Heart right ventricle (tissue), 16 donors: ENCODE measurements at regions of chr10 and their contacts with region 1.

Region 1: GRCh38 chr10:103145860-103146466 is 47.1 kb downstream of the NT5C2 start:
- DNase-seq: peak; percentile 21 to 91
- ATAC-seq: peak; percentile 80 to 91 (median 88)
- H3K4me3 ChIP-seq: peak overlapping the region in 6 of 10 donors; percentile 3 to 39 (median 35)
- H3K27ac ChIP-seq: peak overlapping the region; percentile 28 to 74 (median 62)
- H3K4me1 ChIP-seq: peaks cover 0 to 63% (median 30%) of the 10 kb centered on the region in 9 donors
- H3K27me3 ChIP-seq: no peaks in the 10 kb centered on the region
- CTCF ChIP-seq: no peak

Region 2: DNA sequence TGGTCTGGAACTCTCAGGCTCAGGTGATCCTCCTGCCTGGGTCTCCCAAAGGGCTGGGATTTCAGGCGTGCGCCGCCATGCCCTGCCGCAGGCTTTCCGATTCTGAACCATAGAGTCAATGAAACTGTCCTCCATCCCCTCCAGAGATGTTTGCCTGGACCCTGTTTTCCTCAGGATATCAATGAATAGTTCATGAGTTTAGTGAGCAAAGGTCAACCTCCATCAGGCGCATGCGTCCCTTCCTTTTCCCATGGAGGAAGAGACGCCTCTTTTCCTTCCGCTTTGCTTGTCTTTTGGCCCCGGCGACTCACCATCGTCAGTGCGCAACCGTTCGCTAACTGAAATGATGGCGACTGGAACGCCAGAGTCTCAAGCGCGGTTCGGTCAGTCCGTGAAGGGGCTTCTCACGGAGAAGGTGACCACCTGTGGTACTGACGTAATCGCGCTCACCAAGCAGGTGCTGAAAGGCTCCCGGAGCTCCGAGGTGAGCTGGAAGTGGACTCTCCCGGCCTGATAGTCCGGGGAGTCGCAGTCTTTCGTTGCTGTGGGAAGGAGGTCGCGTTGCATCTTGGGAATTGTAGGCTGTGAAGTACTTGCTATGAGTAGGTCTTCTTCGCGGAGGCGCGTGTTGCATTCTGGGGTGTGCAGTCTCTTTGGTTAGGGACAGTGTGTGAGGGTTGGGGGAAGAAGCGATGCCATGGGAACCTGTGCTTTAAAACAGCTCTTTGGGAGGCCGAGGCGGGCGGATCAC is 291.8 kb before region 1 on chr10 and contains the start of gene BORCS7:
- intact Hi-C with region 1: no loop called
- DNase-seq: peak; percentile 84 to 95
- ATAC-seq: peak; percentile 99 to 100 (median 100)
- H3K4me3 ChIP-seq: peak within 1 kb of the TSS; percentile 53 to 86 (median 76)
- H3K27ac ChIP-seq: peak within 1 kb of the TSS; percentile 91 to 98 (median 96)
- H3K4me1 ChIP-seq: peaks cover 0 to 30% (median 23%) of the 10 kb centered on the region in 9 donors
- H3K27me3 ChIP-seq: no peaks in the 10 kb centered on the region
- CTCF ChIP-seq: peak in 1 of 9 donors; percentile 6
- total RNA-seq, gene BORCS7: 14.5 to 24.2 (median 17.6) TPM

Region 3: GRCh38 chr10:103111031-103111917 is 34.7 kb before region 1 on chr10:
- intact Hi-C with region 1: loop called in 2 of 10 experiments (anchors 5 kb)
- DNase-seq: no peak
- ATAC-seq: peak in 7 of 8 donors; percentile 80 to 97 (median 87)
- H3K4me3 ChIP-seq: peak overlapping the region in 1 of 10 donors; percentile 3
- H3K27ac ChIP-seq: peak overlapping the region; percentile 16 to 78 (median 48)
- H3K4me1 ChIP-seq: peaks cover 14 to 45% (median 37%) of the 10 kb centered on the region in 9 donors
- H3K27me3 ChIP-seq: no peaks in the 10 kb centered on the region
- CTCF ChIP-seq: peak in 1 of 9 donors; percentile 7